ENCODE measurements at regions of chr19 and their contacts with region 1.

Region 1: DNA sequence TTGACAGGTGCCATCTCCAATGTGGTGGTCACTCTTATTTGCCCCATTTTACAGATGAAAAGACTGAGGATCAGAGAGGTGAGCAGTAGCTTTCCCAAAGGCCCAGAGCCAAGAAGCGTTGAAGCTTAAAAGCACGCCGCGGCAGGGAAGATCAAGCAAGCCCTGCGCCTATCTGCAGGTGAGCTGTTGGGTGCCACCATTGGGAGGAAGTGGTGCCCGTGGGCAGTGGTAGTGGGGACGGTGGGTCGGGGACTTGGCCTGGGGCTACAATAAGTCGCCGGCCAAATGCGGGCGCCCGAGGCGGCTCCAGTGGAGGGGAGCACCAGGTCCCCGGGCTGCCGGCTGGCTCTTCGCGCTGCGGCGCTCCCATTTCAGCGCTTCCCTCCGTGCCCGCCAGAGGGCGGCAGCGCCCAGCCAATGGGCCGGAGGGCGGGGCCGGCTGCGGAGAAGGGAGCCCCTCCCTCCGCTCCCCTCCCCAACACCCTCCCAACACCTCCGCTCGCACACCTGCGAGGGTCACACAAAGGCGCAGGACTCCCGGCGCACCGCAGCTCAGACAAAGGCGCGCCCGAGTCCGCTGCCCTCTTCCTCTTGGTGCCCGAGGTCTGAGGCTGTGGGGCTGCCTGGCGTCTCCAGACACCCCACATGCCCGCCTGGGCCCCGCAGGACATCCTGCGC is 744 bp upstream of the POU2F2 start:
- DNase-seq: peak; percentile 69 to 97 (median 85)
- ATAC-seq: peak; percentile 87
- H3K4me3 ChIP-seq: peak overlapping the region; percentile 81
- H3K4me3 Mint-ChIP-seq: peak overlapping the region; percentile 81 to 95 (median 92)
- H3K27ac ChIP-seq: peak overlapping the region; percentile 80
- H3K27ac Mint-ChIP-seq: peak overlapping the region; percentile 69 to 94 (median 87)
- H3K4me1 ChIP-seq: peaks cover 23 to 33% of the 10 kb centered on the region in 2 donors
- H3K4me1 Mint-ChIP-seq: peaks cover 54 to 79% (median 65%) of the 10 kb centered on the region in 7 donors
- H3K27me3 ChIP-seq: no peaks in the 10 kb centered on the region
- H3K27me3 Mint-ChIP-seq: no peaks in the 10 kb centered on the region

Region 2: GRCh38 chr19:42108527-42109389 is 24.2 kb before region 1 on chr19:
- CTCF ChIA-PET with region 1: interaction called, 38 read pairs
- POLR2A ChIA-PET with region 1: interaction called, 5 read pairs
- intact Hi-C with region 1: loop called (anchors 1 kb)
- DNase-seq: peak; percentile 73 to 89 (median 83)
- ATAC-seq: peak; percentile 100
- H3K4me3 ChIP-seq: no peak overlapping the region
- H3K4me3 Mint-ChIP-seq: no peak overlapping the region
- H3K27ac ChIP-seq: no peak overlapping the region
- H3K27ac Mint-ChIP-seq: peak overlapping the region in 6 of 9 donors; percentile 28 to 60 (median 34)
- H3K4me1 ChIP-seq: no peaks in the 10 kb centered on the region
- H3K4me1 Mint-ChIP-seq: peaks cover 6 to 44% (median 13%) of the 10 kb centered on the region in 7 donors
- H3K27me3 ChIP-seq: no peaks in the 10 kb centered on the region
- H3K27me3 Mint-ChIP-seq: no peaks in the 10 kb centered on the region

Region 3: DNA sequence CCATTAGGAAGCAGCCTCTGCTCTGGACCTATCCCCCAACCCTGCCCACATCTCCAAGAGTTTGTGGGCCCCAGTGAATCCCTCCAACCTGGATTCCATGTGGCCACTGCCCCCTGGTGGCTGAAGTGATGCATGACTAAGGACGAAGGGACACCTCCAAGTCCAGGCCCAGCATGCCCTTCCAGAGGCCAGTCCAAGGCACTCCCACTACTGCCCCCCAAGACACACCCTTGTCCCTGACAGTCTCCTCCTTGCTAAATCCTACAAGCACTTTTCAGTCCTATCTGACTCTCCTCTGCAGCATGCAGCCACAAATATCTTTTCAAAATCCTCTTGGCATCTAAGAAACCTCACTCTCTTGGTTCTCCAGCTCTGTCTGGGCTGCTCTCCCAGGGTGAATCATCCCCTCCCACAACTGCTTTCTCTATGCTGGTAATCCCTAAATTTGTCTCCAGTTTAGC is 51.4 kb after region 1 on chr19:
- CTCF ChIA-PET with region 1: interaction called, 6 read pairs
- POLR2A ChIA-PET with region 1: interaction called, 3 read pairs
- intact Hi-C with region 1: loop called (anchors 1 kb)
- DNase-seq: peak; percentile 29 to 76 (median 51)
- ATAC-seq: peak; percentile 68
- H3K4me3 ChIP-seq: no peak overlapping the region
- H3K4me3 Mint-ChIP-seq: peak overlapping the region in 7 of 10 donors; percentile 28 to 71 (median 55)
- H3K27ac ChIP-seq: no peak overlapping the region
- H3K27ac Mint-ChIP-seq: peak overlapping the region; percentile 41 to 73 (median 65)
- H3K4me1 ChIP-seq: peaks cover 25 to 29% of the 10 kb centered on the region in 2 donors
- H3K4me1 Mint-ChIP-seq: peaks cover 43 to 62% (median 52%) of the 10 kb centered on the region in 7 donors
- H3K27me3 ChIP-seq: no peaks in the 10 kb centered on the region
- H3K27me3 Mint-ChIP-seq: peaks cover 0 to 16% (median 0%) of the 10 kb centered on the region in 5 donors

Region 4: DNA sequence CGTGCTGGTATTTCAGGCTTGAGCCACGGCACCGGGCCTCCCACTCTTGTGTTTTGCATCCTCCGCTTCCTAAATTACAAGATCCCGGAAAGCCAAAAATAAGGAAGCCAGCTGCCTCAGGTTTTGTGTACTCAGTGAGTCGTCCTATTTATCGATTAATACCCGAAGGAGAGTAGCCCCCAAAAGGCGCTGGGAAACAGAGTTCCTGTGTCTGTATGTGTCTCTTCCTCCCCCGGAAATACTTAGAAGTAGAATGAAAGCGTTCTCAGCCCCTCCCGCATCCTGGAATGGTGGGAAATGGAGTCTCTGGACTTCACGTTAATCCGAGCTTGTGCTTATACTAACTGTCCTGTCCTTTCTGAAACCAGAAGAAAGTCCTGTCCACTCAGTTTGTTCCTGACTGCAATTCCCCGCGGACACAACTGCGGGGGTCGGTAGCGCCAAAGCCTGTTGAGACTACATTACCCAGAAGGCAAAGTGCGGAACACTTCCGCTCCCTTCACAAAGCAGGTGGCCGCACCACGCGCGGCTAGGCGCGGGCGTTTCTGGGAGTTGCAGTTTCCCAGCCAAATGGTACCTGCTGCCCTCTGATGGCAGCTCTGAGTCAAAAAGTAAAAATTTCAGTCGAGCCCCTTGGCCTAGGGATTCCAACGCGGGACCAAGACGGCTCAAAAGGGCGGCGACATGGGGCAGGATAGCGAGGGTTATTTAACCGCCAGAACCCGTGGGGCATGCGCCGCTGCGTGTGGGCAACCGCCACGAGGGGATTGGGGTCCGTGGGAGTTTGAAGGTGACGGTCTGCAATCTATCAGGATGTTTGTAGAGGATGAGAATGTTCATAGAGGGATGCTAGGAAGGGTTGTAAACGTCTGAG is 111.6 kb after region 1 on chr19:
- CTCF ChIA-PET with region 1: interaction called, 9 read pairs
- POLR2A ChIA-PET with region 1: interaction called, 10 read pairs
- intact Hi-C with region 1: loop called (anchors 1 kb)
- DNase-seq: peak; percentile 76 to 93 (median 90)
- ATAC-seq: peak; percentile 51
- H3K4me3 ChIP-seq: peak overlapping the region; percentile 68
- H3K4me3 Mint-ChIP-seq: peak overlapping the region; percentile 91 to 98 (median 96)
- H3K27ac ChIP-seq: peak overlapping the region; percentile 73
- H3K27ac Mint-ChIP-seq: peak overlapping the region; percentile 84 to 99 (median 96)
- H3K4me1 ChIP-seq: peaks cover 28 to 38% of the 10 kb centered on the region in 2 donors
- H3K4me1 Mint-ChIP-seq: peaks cover 36 to 58% (median 54%) of the 10 kb centered on the region in 7 donors
- H3K27me3 ChIP-seq: no peaks in the 10 kb centered on the region
- H3K27me3 Mint-ChIP-seq: no peaks in the 10 kb centered on the region

Region 5: DNA sequence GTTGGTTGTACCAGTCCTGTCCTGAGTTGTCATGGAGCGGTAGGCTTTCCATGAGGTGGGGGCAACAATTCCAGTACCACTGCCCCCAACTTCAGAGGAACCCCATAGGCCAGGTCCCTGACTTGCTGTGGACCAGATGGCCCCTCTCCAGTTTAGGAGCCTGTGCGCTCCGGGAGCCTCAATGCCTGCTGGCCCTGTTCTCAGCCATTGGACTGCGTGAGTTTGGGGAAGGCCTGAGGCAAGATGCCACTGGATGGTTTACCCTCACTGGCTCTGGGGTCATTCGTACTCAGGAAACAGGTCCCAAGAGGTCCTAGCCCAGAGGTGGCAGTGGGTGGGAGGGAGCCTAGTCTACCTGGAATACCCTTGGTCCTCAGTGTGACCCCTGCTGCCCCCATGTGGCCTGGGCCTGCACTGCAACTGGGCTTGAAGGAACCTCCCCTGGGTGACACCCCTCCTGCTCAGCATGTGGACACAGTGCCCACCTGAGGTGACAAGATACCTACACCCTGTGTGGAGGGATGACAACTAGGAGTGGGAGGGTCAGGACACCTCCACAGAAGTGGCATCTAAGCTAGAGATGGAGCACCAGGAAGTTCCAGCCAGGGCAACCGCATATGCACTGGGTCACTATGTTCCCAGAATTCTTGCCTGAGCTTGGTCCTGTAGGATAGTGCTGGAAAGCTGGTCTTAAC is 163.0 kb after region 1 on chr19:
- CTCF ChIA-PET with region 1: interaction called, 6 read pairs
- POLR2A ChIA-PET with region 1: interaction called, 4 read pairs
- intact Hi-C with region 1: loop called (anchors 1 kb)
- DNase-seq: peak; percentile 76 to 94 (median 85)
- ATAC-seq: peak; percentile 96
- H3K4me3 ChIP-seq: no peak overlapping the region
- H3K4me3 Mint-ChIP-seq: no peak overlapping the region
- H3K27ac ChIP-seq: no peak overlapping the region
- H3K27ac Mint-ChIP-seq: peak overlapping the region in 6 of 9 donors; percentile 11 to 70 (median 42)
- H3K4me1 ChIP-seq: peaks cover 0 to 8% of the 10 kb centered on the region in 2 donors
- H3K4me1 Mint-ChIP-seq: peaks cover 8 to 18% (median 12%) of the 10 kb centered on the region in 7 donors
- H3K27me3 ChIP-seq: no peaks in the 10 kb centered on the region
- H3K27me3 Mint-ChIP-seq: no peaks in the 10 kb centered on the region

Region 6: DNA sequence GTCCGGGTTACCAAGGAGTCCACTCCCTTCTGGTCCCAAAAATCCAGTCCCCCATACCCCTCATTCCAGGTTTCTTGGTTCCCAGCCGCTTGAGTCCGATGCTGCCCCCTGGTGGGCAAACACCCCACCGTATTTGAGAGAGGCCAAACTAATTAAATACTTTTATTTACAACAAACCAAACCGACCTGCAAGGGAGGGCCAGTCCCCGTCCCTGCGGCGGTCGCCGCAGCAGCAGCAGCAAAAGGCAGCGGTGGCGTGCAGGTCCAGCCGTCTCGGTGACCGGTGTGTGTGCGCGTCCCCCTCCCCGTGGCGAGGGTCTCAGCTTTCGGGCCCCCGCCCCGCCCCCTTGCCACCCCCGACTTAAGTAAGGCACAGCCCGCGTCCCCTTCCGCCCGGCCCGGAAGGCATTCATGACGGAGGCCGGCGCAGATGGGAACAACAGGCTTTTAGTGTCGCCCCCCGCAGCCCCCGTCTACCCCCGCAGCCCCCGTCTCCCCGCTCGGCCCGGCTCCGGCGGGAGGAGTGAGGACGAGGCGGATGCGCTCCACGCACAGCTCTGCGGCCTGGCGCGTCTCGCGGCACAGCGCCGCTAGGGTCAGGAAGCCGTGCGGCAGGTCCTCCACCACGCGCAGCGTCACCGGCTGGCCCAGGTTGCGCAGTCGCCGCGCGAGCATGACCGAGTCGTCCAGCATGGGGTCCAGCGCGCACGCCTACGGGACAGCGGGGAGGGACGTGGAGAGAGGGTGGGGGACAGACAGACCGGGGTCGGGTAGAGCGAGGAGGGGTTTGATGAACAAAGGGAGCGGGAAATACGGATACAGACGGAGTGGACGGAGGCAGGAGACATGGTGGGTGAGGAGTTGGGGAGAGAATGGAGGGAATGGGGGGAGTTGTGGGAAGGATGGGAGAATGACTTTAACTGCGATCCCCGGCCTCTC is 268.6 kb after region 1 on chr19:
- CTCF ChIA-PET with region 1: interaction called, 7 read pairs
- POLR2A ChIA-PET with region 1: no interaction called
- intact Hi-C with region 1: loop called in 1 of 2 experiments (anchors 1 kb)
- DNase-seq: peak; percentile 46 to 72 (median 64)
- ATAC-seq: peak; percentile 78
- H3K4me3 ChIP-seq: peak overlapping the region; percentile 62
- H3K4me3 Mint-ChIP-seq: peak overlapping the region; percentile 79 to 88 (median 84)
- H3K27ac ChIP-seq: peak overlapping the region; percentile 68
- H3K27ac Mint-ChIP-seq: peak overlapping the region; percentile 49 to 88 (median 81)
- H3K4me1 ChIP-seq: peaks cover 12 to 13% of the 10 kb centered on the region in 2 donors
- H3K4me1 Mint-ChIP-seq: peaks cover 25 to 51% (median 42%) of the 10 kb centered on the region in 7 donors
- H3K27me3 ChIP-seq: no peaks in the 10 kb centered on the region
- H3K27me3 Mint-ChIP-seq: no peaks in the 10 kb centered on the region

Region 7: GRCh38 chr19:42440357-42441048 is 307.5 kb after region 1 on chr19:
- CTCF ChIA-PET with region 1: interaction called, 3 read pairs
- POLR2A ChIA-PET with region 1: no interaction called
- intact Hi-C with region 1: loop called in 1 of 2 experiments (anchors 1 kb)
- DNase-seq: peak; percentile 51 to 84 (median 76)
- ATAC-seq: peak; percentile 75
- H3K4me3 ChIP-seq: no peak overlapping the region
- H3K4me3 Mint-ChIP-seq: peak overlapping the region in 7 of 10 donors; percentile 24 to 69 (median 47)
- H3K27ac ChIP-seq: no peak overlapping the region
- H3K27ac Mint-ChIP-seq: peak overlapping the region in 8 of 9 donors; percentile 2 to 53 (median 25)
- H3K4me1 ChIP-seq: peaks cover 13 to 16% of the 10 kb centered on the region in 2 donors
- H3K4me1 Mint-ChIP-seq: peaks cover 20 to 34% (median 31%) of the 10 kb centered on the region in 7 donors
- H3K27me3 ChIP-seq: no peaks in the 10 kb centered on the region
- H3K27me3 Mint-ChIP-seq: peaks cover 0 to 7% (median 0%) of the 10 kb centered on the region in 5 donors

Measured in naive thymus-derived CD4-positive, alpha-beta T cell (primary cell).